ENCODE measurements at regions of chrX and their contacts with region 1.

Region 1: DNA sequence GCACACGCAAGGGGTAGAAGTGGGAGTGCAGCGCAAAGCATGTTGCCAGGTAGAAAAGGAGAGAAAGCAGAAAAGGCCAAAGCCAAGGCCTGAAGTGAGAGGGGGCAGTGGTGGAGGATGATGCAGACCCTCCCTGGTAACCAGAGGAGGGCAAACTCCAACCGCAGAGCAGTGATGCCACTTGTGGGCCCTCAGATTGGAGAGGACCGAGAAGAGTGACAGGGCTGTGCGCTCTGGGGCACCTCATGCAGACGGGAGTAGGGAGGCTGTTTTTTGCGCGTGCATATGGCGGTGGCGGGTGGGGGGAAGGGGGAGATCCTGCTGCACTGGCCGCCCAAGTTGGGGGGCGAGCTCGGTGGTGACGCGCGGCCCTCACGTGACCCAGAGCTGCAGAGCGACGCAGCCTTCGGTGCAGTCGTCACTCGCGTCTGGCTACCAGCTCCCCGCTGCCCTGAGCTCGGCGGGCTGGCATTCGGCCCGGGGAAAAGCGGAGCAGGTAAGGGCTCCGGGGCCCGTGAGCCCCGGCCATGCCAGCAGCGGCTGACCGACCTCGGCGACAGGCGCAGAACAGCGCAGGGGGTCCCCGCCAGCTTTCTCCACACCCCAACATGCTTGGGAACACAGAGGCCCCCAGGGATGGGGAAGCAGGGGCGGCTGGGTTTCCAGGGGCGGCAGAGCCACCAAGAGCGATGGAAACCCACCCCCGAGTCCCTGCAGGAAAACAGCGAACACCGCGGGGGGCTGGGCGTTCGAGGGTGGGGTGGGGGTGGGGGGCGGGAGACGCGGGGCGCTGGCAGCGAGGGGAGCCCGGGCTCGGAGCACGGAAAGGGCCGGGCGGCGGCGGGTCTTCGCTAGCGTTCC is at the start of gene BEX3:
- DNase-seq: peak; percentile 55
- H3K4me3 ChIP-seq: peak within 1 kb of the TSS; percentile 74 to 91 (median 91)
- H3K27ac ChIP-seq: peak within 1 kb of the TSS; percentile 89
- H3K4me1 ChIP-seq: peaks cover 6% of the 10 kb centered on the region
- H3K27me3 ChIP-seq: no peaks in the 10 kb centered on the region
- CTCF ChIP-seq: no peak
- POLR2A ChIP-seq: peak; percentile 65
- total RNA-seq, gene BEX3: 227 and 233 TPM in 2 replicates

Region 2: GRCh38 chrX:103356130-103356798 is 20.1 kb before region 1 on chrX and contains the start of gene TCEAL9:
- CTCF ChIA-PET with region 1: interaction called, 7 read pairs
- POLR2A ChIA-PET with region 1: interaction called, 7 read pairs
- dilution Hi-C with region 1: no loop called
- intact Hi-C with region 1: loop called (anchors 1 kb)
- DNase-seq: peak; percentile 79
- H3K4me3 ChIP-seq: peak within 1 kb of the TSS; percentile 81 to 97 (median 90)
- H3K27ac ChIP-seq: peak within 1 kb of the TSS; percentile 91
- H3K4me1 ChIP-seq: peaks cover 18% of the 10 kb centered on the region
- H3K27me3 ChIP-seq: no peaks in the 10 kb centered on the region
- CTCF ChIP-seq: no peak
- POLR2A ChIP-seq: peak; percentile 78
- total RNA-seq, gene TCEAL9: 98.3 and 99.2 TPM in 2 replicates

Region 3: GRCh38 chrX:103398421-103398864 is 22.1 kb after region 1 on chrX:
- CTCF ChIA-PET with region 1: no interaction called
- POLR2A ChIA-PET with region 1: interaction called, 5 read pairs
- dilution Hi-C with region 1: no loop called
- intact Hi-C with region 1: loop called (anchors 1 kb)
- DNase-seq: peak; percentile 73
- H3K4me3 ChIP-seq: no peak overlapping the region
- H3K27ac ChIP-seq: peak overlapping the region; percentile 92
- H3K4me1 ChIP-seq: peaks cover 30% of the 10 kb centered on the region
- H3K27me3 ChIP-seq: no peaks in the 10 kb centered on the region
- CTCF ChIP-seq: no peak
- POLR2A ChIP-seq: no peak

Region 4: DNA sequence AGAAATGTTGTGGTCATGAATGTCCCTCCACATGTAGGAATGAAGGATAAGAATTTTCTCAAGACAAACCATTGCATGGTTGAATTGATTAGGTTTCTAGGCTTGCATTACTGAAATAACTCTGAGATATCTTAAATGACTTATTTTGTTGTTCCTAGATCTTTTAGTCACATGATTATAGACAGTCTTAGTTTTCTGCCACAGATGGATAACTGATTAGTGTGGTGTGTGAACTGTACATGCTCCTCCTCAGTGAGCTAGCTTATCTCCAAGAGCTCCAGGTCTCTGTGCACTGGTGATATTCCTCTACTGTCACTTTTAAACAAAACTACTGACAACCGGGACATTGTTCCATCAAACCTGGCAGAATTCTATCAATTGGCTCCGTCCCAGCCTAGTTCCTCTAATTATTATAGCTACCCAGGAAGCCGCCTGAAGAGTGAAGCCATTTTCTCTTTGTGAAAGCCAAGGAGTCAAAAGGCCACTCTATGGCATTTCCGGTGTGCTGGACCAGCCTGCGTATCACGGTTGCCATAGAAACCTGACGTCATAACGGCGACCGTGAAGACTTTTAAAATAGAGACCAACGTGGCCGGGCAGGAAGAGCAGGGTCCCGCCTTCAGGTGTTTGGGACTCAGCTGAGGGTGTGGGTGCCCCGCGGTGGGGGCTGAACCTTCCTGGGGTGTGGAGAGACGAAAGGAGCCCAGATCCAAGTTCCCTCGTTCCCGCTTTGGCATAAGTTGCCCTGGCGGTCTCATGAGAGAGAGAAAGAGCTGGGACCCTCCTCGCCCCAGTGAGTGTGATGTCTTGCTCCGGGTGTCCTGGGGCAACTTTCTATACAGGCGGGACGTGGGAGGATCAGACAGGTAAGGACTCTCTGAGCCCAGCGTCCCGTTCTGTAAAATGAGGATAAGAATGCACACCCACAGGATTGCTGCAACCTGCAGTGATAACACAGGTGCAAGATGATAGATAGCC is 28.2 kb after region 1 on chrX:
- CTCF ChIA-PET with region 1: interaction called, 3 read pairs
- POLR2A ChIA-PET with region 1: no interaction called
- dilution Hi-C with region 1: no loop called
- intact Hi-C with region 1: loop called (anchors 1 kb)
- DNase-seq: peak; percentile 79
- H3K4me3 ChIP-seq: peak overlapping the region; percentile 19 to 62 (median 41)
- H3K27ac ChIP-seq: peak overlapping the region; percentile 71
- H3K4me1 ChIP-seq: peaks cover 11% of the 10 kb centered on the region
- H3K27me3 ChIP-seq: no peaks in the 10 kb centered on the region
- CTCF ChIP-seq: no peak
- POLR2A ChIP-seq: no peak

Measured in endothelial cell of umbilical vein (primary cell).